RWPE1 (cell line): ENCODE measurements at regions of chr11 and their contacts with region 1.

Region 1: GRCh38 chr11:112481431-112481830 is 220.8 kb upstream of the PLET1 start:
- DNase-seq: no peak
- H3K27ac ChIP-seq: no peak overlapping the region
- CTCF ChIP-seq: no peak

Region 2: DNA sequence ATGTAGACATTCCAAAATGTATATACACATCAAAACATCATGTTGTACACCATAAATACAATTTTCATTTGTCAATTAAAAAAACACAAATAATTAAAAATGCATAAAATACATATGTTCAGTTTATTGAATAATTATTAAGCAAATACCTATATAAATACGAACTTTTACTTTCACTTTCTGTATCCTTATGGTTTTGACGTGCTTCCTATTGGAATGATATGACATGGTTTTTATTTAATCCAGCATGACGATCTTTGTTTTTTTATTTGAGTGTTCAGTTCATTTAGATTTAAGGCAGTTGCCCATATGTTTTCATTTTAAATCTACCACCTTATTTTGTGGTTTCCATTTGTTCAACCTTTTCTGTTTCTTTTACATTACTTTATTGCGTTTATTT is 22.4 kb before region 1 on chr11:
- CTCF ChIA-PET with region 1: interaction called, 10 read pairs
- POLR2A ChIA-PET with region 1: no interaction called
- DNase-seq: no peak
- H3K27ac ChIP-seq: no peak overlapping the region
- CTCF ChIP-seq: no peak